ENCODE measurements at regions of chr10 and their contacts with region 1.

Region 1: GRCh38 chr10:79399223-79399831 is 46.1 kb downstream of the ZCCHC24 start:
- DNase-seq: peak; percentile 79
- H3K4me3 ChIP-seq: no peak overlapping the region
- H3K27ac ChIP-seq: no peak overlapping the region
- H3K4me1 ChIP-seq: peaks cover 64 to 82% (median 69%) of the 10 kb centered on the region in 4 donors
- H3K27me3 ChIP-seq: no peaks in the 10 kb centered on the region
- CTCF ChIP-seq: no peak
- EP300 ChIP-seq: peak; percentile 87
- POLR2A ChIP-seq: no peak

Region 2: DNA sequence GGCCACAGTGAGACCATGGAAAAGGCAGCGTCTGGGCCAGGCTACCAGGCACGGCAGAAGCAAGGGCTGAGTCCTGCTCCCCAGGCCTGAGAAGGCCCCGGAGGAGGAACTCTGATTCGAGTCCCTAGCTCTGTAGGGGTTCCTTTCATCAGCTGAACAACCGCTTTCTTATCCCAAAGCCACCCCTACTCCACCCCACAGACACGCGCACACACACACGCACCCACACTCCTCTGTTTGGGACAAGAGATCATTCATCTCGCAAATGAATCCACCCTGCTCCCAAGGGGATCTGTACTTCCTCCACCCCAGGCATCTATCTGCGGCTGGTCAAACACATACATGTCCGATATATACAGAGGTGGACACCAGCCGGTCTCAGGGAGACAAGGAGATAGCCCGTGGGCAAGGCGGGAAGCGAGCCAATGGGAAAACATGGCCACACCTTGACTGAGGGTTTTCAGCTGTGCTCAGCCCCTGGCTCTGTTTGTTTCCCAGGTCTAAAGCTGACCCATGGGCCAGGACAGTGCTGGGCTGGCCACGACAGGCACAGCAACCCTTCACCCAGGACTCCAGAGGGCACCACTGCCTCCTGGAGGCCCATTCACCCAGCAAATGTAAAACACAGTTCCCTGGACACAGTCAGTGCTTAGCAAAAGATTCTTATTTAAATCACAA is 38.8 kb after region 1 on chr10:
- in situ Hi-C with region 1: no loop called
- intact Hi-C with region 1: loop called (anchors 5 kb)
- DNase-seq: no peak
- H3K4me3 ChIP-seq: no peak overlapping the region
- H3K27ac ChIP-seq: peak overlapping the region; percentile 85 to 97 (median 89)
- H3K4me1 ChIP-seq: peaks cover 27 to 87% (median 62%) of the 10 kb centered on the region in 4 donors
- H3K27me3 ChIP-seq: no peaks in the 10 kb centered on the region
- CTCF ChIP-seq: peak in 3 of 5 experiments; percentile 14 to 24 (median 18)
- EP300 ChIP-seq: no peak
- POLR2A ChIP-seq: no peak

Region 3: GRCh38 chr10:79502561-79503309 is 103.4 kb after region 1 on chr10:
- in situ Hi-C with region 1: no loop called
- intact Hi-C with region 1: no loop called
- DNase-seq: no peak
- H3K4me3 ChIP-seq: no peak overlapping the region
- H3K27ac ChIP-seq: no peak overlapping the region
- H3K4me1 ChIP-seq: no peaks in the 10 kb centered on the region
- H3K27me3 ChIP-seq: no peaks in the 10 kb centered on the region
- CTCF ChIP-seq: peak in 3 of 5 experiments; percentile 20 to 22 (median 22)
- EP300 ChIP-seq: no peak
- POLR2A ChIP-seq: no peak

Measured in transverse colon (tissue), 4 donors.